ENCODE measurements at regions of chr5 and their contacts with region 1.

Region 1: DNA sequence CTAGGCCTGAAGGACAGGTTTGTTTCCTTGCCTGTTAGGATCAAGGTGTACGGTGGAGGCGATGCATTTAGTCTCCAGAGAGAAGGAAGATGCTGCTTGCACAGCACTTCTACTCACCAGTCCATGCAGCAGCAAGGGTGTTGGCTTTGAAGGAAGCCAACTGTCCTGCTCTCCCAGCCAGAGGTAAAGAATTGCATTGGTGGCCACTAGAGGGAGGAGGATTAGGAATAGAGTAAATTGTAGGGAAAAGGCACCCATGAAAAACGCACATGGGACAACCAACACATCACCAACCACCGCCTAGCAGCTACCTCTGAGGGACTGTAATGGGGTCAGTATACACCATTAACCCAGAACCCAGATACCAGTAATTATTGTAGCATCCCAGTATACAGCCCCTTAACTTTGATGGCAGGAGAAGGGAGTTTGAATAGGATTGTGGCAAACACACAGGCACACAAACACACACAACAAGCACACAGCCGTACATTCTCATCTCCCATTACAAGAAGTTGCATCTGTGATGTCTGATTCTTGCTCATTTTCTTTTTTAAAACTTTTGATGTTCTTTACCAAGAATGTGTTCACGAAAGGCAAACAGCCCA is 267.7 kb downstream of the ADAMTS6 start:
- DNase-seq: no peak
- H3K4me3 Mint-ChIP-seq: no peak overlapping the region
- H3K27ac Mint-ChIP-seq: no peak overlapping the region
- H3K4me1 Mint-ChIP-seq: no peaks in the 10 kb centered on the region
- H3K27me3 Mint-ChIP-seq: peaks cover 2% of the 10 kb centered on the region

Region 2: DNA sequence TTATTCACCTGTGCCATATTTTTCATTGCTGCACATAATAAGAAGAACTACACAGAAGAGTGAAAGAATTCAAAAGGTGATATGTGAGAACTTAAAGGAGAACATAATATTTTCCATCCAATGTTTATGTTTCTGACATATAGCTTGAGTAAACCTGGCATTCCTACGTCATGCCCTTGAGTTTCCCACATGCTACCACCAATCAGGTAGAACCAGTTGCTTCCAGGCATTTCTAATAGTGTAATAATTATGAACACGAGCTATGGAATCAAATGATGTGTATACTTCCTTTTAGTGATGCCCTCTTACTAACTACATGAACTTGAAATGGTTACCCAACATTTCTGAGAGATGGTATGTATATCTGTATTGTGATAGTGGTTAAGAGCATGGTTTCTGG is 1802.1 kb before region 1 on chr5:
- intact Hi-C with region 1: loop called (anchors 10 kb)
- DNase-seq: no peak
- H3K4me3 Mint-ChIP-seq: no peak overlapping the region
- H3K27ac Mint-ChIP-seq: no peak overlapping the region
- H3K4me1 Mint-ChIP-seq: no peaks in the 10 kb centered on the region
- H3K27me3 Mint-ChIP-seq: no peaks in the 10 kb centered on the region

Region 3: DNA sequence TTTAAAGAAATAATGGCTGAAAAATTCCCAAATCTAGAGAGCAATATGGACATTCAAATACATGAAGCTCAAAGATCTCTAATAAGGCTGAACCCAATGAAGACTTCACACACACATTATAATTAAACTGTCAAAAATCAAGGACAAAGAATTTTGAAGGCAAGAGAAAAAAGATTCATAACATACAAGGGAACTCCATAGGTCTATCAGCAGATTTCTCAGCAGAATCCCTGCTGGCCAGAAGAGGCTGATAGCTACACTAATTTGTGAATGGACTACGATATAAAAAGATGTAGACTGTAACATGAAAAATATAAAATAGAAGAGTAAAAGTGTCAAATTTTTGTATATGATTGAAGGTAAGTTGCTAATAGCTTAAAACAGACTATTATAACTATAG is 15.8 kb after region 1 on chr5:
- intact Hi-C with region 1: no loop called
- DNase-seq: no peak
- H3K4me3 Mint-ChIP-seq: no peak overlapping the region
- H3K27ac Mint-ChIP-seq: no peak overlapping the region
- H3K4me1 Mint-ChIP-seq: no peaks in the 10 kb centered on the region
- H3K27me3 Mint-ChIP-seq: no peaks in the 10 kb centered on the region

Region 4: DNA sequence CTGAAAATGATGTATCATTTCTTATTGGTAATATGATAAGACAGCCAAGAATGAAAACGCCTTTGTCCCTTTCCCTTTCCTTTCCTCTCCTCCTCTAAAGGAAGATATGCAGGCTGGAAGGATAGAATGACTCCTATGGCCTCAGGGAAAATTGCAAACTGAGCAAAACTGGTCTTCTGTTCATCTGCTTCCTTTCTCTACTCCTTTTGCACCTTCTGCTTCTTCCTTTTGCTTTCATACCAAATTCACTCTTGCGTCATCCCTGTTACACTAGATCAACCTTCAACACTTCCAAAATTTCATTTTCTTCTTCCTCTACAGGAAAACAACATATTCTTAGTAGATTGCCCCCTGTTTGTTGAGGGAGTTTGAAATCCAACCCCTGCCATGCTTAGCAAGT is 33.6 kb after region 1 on chr5:
- intact Hi-C with region 1: loop called (anchors 1 kb)
- DNase-seq: no peak
- H3K4me3 Mint-ChIP-seq: no peak overlapping the region
- H3K27ac Mint-ChIP-seq: no peak overlapping the region
- H3K4me1 Mint-ChIP-seq: no peaks in the 10 kb centered on the region
- H3K27me3 Mint-ChIP-seq: no peaks in the 10 kb centered on the region

Measured in activated T-helper 1 cell treated with anti-CD3 and anti-CD28 coated beads, Interleukin-12 subunit alpha, Interleukin-12 subunit beta, Interleukin-2, Interleukin-4 antibody, amounts not matched to agents 30 ng/mL and 10 ng/mL and 1 ng/mL, durations not matched to agents 14 hours and 24 hours and 36 hours (primary cell).